GM18951 (cell line): ENCODE measurements at regions of chr5 and their contacts with region 1.

Region 1: DNA sequence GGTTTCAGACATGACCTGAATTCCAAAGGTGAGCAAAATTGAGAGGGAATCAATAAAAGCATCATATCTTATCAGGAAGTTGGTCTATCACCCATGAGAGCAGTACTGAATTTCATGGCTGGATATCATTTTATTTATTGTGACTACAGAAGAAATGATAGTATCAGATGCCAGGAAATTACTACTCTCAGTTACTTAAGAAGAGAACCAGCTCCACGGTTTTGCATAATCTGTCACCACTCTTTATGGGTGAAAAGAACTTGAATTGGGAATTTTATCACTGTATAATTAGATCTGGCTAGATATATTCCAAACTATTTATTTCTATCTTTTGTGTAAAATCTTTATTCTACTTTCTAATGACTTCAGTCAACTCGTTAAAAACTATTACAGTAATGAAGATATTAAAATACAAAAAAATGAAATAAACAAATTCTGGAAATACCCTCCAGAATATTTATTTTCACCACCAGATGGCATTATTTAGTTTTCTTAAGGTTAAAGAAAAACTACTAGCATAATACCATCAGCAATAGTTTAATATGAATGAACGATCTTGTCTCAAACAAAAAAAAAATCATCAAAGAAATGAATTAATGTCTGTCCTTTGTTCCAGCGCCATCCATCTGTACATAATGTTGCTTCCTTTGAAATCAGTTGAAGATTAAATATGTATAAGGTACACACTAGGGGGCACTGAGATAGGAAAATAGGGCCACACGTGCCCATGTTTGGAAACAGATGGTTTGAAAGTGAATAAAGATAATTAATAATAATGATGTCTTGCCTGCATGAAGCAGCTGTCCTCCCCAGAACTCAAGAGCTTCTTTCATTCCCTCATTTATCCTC is 84.7 kb upstream of the SLCO6A1 start:
- POLR2A ChIP-seq: no peak

Region 2: DNA sequence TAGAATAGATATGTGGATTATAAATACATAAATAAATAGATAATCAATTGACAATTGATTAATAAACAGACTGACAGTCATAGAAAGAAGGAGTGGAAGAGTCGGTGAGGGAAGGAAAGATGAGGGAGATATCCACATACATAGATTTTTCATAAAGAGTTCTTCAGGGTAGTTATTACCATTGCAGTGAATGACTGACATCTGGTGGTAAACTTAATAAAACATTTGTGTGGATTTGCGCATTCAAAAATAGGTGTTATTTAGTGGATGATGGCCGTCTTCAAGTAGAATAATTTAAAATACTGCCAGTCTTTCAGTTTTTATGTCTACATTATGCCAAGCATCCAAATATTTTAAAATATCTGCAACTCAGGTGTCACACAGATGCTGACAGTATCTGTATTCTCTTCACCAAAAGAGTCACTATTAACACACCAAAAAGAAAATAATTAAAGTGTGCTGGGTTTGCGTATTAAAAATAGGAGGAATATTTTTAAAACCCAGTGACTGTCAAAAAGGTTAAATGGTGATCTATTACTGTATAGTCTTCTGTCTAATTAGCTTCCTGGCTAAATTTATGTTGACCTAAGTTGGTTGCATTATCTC is 457.7 kb after region 1 on chr5:
- in situ Hi-C with region 1: loop called (anchors 25 kb)
- POLR2A ChIP-seq: no peak

Region 3: GRCh38 chr5:103139264-103139865 is 555.9 kb after region 1 on chr5:
- in situ Hi-C with region 1: loop called (anchors 25 kb)
- POLR2A ChIP-seq: no peak